Dorsolateral prefrontal cortex (tissue), 120 donors: ENCODE measurements at regions of chr9 and their contacts with region 1.

Region 1: GRCh38 chr9:135907431-135908092 is at the start of gene CAMSAP1:
- DNase-seq: peak; percentile 70 to 91 (median 84)
- H3K4me3 ChIP-seq: peak within 1 kb of the TSS; percentile 69 to 97 (median 87)
- H3K27ac ChIP-seq: peak within 1 kb of the TSS in 56 of 59 donors; percentile 5 to 91 (median 79)
- H3K27me3 ChIP-seq: no peaks in the 10 kb centered on the region
- CTCF ChIP-seq: peak in 7 of 56 donors; percentile 7 to 28 (median 18)
- total RNA-seq, gene CAMSAP1: 59.6 to 100 (median 81.1) TPM

Region 2: DNA sequence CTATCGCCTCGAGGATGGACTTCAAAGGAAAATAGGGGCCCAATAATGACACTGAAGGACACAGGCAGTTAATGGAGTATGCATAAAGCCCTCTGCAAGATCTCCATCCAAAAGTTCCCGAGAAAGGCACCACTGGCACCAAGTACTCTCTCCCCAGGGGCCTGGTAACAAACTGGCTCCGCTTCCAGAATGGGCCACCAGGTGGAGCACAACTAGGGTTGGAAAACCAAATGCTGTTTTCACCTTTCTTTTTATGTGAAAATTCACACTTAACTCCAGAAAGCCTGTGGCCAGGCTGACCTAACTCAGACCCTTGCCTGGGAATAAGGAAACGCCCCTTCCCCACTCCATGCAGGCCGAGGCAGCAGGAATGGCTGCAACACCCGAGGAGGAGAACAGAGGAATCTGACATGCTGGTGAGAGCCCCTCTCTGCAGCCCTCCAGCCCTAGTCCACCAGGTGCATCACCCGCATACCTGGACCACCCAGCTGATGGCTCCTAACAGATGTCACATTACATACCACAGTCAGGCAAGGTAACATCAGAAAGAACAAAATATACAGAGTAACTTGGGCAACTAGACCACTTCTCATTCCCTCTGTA is 43.0 kb before region 1 on chr9:
- intact Hi-C with region 1: loop called in 1 of 2 experiments (anchors 2 kb)
- DNase-seq: peak in 9 of 10 donors; percentile 59 to 80 (median 74)
- H3K4me3 ChIP-seq: no peak overlapping the region
- H3K27ac ChIP-seq: peak overlapping the region in 12 of 59 donors; percentile 5 to 61 (median 26)
- H3K27me3 ChIP-seq: no peaks in the 10 kb centered on the region
- CTCF ChIP-seq: peak; percentile 75 to 94 (median 89)

Region 3: GRCh38 chr9:135992486-135993408 is 85.2 kb after region 1 on chr9:
- intact Hi-C with region 1: no loop called
- DNase-seq: peak in 2 of 10 donors; percentile 37 to 49
- H3K4me3 ChIP-seq: peak overlapping the region in 43 of 59 donors; percentile 1 to 50 (median 27)
- H3K27ac ChIP-seq: peak overlapping the region in 57 of 59 donors; percentile 7 to 97 (median 76)
- H3K27me3 ChIP-seq: peaks cover 0 to 10% (median 0%) of the 10 kb centered on the region in 45 donors
- CTCF ChIP-seq: peak in 1 of 56 donors; percentile 9

Region 4: DNA sequence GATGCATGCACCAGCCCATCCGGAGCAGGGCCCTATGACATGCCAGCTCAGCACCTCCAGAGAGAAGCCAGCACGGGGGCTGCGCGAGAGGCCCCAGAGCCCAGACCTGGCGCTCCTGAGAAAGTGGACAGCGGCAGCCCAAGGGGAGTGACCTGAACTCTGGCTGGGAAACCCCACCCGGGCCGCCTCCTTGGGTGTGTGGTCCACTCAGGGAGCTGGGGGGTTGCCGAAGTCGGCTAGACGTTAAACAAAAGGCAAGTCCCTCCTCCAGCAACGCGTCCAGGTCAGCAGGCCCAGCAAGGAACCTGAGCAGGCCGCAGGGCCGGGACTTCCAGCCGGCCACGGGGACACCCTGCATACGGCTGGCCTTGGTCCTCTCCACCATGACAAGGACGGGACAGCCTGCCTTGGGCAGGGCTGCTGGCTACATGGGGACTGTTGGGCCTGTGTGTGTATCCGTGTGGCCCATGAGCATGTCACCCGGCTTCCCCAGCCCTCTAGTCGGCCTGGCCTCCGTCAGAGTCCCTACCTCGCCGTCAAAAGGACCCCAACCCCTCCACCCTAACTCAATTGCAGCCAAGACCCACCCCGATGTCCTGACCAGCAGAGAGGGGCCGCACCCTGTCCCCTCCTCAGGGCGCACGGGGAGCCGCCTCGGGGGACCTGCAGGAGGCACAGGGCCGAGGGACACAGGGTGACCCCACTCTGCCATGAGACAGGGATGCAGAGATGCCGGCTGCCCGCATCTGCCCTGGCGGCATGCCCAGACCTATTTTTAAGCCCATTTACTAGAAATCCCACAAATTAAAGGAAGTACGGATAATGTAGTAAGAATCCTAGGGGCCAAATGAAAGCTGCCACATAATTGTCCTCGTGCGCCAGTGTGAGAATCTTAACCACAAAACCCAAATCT is 152.0 kb after region 1 on chr9:
- intact Hi-C with region 1: no loop called
- DNase-seq: peak in 2 of 10 donors; percentile 8 to 25
- H3K4me3 ChIP-seq: no peak overlapping the region
- H3K27ac ChIP-seq: peak overlapping the region in 1 of 59 donors; percentile 9
- H3K27me3 ChIP-seq: no peaks in the 10 kb centered on the region
- CTCF ChIP-seq: no peak